Psoas muscle (tissue), 8 donors: ENCODE measurements at regions of chr17 and their contacts with region 1.

Region 1: DNA sequence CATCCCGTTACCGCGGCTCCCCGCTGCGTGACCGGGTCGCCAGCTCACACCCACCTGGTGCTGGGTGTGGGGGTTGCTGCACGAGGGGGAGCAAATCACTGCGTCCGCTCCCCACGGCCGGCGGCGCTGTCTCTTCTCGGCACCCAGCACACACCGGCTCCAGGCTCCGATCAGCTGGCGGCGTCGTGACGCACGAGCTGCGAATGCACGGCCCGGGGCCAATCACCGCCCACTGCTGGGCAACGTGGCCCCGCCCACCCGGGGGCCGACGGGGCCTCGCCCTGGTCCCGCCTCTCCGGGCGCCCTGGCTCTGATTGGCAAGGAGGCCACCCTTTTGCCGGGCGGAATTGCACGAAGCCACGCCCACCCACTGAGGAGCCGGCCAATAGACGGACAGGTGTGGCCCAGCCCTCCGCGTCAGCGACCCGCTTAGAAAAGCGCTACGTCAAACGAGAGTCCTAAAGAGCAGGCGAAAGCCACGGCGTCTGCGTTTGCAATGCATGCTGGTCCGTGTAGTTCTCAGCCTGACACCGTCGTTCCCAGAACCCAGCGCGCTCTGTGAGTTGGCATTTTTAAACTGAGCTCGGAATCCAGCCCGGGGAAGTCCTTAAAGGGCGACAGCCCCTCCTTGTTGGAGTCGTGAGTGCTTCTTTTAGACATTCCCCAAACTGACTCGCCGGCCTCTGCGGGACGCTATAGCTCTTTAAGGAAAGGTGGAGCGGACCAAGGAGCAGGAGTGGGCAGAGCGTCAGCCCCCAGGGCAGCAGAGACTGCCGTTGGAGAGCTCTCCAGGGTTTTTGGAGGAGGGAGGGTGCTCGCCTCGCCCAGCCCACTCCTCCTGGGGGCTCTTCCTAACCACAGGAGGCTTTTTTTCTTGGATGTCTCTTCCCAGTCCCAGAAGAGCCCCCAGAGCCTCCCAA is 6.2 kb upstream of the TLCD2 start:
- DNase-seq: peak; percentile 100
- ATAC-seq: peak; percentile 59 to 62 (median 62)
- H3K4me3 ChIP-seq: peak overlapping the region; percentile 97
- H3K27ac ChIP-seq: peak overlapping the region; percentile 100
- H3K4me1 ChIP-seq: peaks cover 55% of the 10 kb centered on the region
- H3K27me3 ChIP-seq: no peaks in the 10 kb centered on the region
- CTCF ChIP-seq: no peak

Region 2: DNA sequence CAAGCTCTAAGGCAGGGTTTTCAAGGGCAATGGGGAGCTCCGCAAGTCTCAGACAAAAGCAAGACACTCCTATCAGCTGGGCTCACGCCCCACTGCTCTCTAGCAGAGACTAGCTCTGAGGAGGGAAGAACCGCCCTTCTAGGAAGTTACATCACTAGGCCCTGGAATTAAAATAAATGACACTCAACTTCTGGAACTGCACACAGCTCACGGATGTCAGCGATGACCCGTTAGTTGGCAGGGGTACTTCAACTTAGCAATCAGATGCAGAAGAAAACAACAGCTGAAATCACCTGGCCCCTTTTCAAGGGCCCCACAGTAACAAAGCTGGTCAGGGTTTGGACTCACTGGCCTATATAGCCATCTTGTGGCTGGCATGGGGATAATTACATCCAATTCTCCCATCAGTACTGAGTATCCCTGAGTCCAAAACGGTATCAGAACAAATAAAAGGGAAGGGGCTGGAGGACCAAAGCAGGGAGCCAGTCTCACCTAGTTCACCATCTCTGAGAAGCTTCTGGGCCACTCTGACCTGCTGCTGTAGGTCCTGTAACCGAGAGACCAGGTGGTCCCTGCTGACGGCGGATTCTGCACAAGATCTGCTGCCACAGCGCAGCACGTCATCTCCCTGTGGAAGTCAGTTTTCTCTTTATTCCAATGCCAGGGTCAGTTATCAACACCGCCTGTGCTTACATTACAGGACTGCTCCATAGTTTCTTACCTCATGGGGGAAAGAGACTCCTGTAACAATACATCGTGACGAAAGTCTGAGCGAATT is 67.7 kb after region 1 on chr17:
- intact Hi-C with region 1: loop called (anchors 1 to 2 kb)
- DNase-seq: peak; percentile 87 to 93
- ATAC-seq: peak; percentile 84 to 85 (median 85)
- H3K4me3 ChIP-seq: peak overlapping the region; percentile 58
- H3K27ac ChIP-seq: peak overlapping the region; percentile 99
- H3K4me1 ChIP-seq: peaks cover 72% of the 10 kb centered on the region
- H3K27me3 ChIP-seq: no peaks in the 10 kb centered on the region
- CTCF ChIP-seq: peak; percentile 82